Activated CD8-positive, alpha-beta T cell treated with anti-CD3 and anti-CD28 coated beads, Interleukin-2, amount 10 ng/mL, durations not matched to agents 7 days and 5 days (primary cell): ENCODE measurements at regions of chr19 and their contacts with region 1.

Region 1: DNA sequence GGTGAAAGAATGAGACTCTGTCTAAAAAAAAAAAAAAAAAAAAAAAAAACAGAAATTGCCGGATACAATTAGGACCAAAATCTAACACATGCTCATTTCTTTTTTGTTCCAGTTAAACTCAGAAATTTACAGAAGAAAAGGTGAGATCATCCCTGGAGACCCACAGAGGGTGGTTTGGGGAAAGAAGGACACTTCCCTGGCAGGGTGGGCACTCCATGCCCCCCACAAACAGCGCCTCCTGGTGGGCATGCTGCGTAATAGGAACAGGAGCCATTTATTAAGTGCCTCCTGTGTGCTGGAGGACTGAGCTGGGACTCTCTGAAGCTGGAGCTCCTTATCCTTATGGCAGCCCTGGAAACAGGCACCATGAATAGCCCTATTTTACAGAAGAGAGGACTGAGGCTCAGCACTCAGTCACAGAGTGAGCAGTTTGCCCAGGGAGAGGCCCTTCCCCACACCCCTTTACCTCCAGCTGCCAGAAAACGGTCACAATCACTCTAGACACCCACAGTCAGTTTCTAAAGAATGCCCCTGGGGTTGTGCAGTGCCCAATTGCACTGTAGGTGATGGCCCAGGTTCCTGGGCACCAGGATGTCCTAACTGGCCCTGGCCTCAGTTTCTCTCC is 10.1 kb downstream of the C19orf38 start:
- DNase-seq: peak; percentile 56
- ATAC-seq: no peak
- H3K4me3 Mint-ChIP-seq: no peak overlapping the region
- H3K27ac Mint-ChIP-seq: peak overlapping the region; percentile 18
- H3K4me1 Mint-ChIP-seq: peaks cover 7% of the 10 kb centered on the region
- H3K27me3 Mint-ChIP-seq: no peaks in the 10 kb centered on the region

Region 2: GRCh38 chr19:10701955-10702525 is 156.3 kb before region 1 on chr19:
- CTCF ChIA-PET with region 1: interaction called, 20 read pairs
- POLR2A ChIA-PET with region 1: no interaction called
- DNase-seq: peak; percentile 47
- ATAC-seq: peak; percentile 34
- H3K4me3 Mint-ChIP-seq: peak overlapping the region; percentile 80
- H3K27ac Mint-ChIP-seq: peak overlapping the region; percentile 74
- H3K4me1 Mint-ChIP-seq: peaks cover 12% of the 10 kb centered on the region
- H3K27me3 Mint-ChIP-seq: peaks cover 5% of the 10 kb centered on the region

Region 3: DNA sequence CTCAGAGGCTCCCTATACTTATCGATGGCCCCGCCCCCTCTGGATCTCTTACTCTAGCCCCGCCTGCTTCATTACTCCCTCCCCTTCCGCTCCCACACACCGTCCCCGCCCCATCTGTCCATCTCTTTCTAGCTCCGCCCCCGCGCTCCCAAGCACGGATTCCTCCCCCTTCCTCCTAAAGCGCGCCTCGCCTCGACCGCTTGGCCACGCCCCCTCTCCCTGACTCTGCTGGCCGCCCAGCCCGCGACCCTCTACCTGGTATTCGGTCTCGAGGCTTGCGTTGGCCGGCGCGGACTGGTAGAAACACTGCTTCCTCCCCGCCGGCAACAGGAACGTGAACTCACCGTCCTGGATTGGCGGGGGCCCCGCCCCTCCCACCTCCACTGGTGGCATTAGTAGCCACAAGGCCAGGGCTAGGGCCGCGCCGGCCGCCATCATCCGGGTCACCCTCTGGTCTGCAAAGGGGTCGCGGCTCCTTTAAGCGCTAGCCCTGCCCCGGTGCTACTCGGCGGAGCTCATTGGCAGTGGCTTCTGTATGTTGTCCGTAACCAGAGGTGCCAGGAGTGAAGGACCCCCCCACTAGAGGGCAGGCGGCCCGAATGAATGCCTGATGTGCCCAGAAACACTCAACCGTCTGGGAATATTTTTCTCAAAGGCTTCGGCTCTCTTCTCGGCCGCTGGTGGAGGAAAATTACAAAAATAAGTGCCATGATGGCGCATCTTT is 22.4 kb before region 1 on chr19 and contains the start of gene TMED1:
- CTCF ChIA-PET with region 1: interaction called, 37 read pairs
- POLR2A ChIA-PET with region 1: interaction called, 4 read pairs
- DNase-seq: peak; percentile 98
- ATAC-seq: peak; percentile 91
- H3K4me3 Mint-ChIP-seq: peak within 1 kb of the TSS; percentile 89
- H3K27ac Mint-ChIP-seq: peak within 1 kb of the TSS; percentile 99
- H3K4me1 Mint-ChIP-seq: peaks cover 17% of the 10 kb centered on the region
- H3K27me3 Mint-ChIP-seq: no peaks in the 10 kb centered on the region
- total RNA-seq, gene TMED1: 9.3 to 11.2 TPM

Region 4: DNA sequence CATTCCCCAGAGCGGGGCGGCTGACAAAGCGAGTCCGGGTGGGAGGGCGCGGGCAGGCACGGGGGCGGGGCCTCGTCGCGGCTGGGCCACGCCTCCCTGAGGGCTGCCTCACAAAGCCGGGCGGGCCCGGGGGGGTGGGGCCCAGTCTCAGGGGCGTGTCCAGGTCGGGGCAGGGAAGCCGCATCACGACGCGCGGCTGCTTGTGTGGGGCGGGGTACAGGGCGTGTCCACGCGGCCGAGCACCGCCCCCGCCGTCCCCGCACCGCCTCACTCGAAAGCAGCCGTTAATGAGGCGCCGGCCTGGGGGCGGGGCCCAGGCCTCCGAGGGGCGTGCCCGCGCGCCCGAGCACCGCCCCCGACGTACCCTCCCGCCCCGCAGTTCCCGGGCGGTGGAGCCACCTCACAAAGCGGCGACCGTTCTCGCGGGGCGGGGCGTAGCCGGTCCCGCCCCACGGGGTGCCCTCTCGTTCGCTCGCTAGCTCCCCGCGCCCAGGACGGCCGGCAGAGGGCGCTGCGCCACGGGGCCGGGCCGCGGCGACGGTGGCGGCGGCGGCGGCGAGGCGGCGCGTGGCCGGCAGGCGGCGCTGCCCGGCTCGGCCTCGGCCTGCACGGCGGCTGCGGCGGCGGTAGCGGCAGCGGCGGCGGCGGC is 12.8 kb after region 1 on chr19 and contains the start of gene CARM1:
- CTCF ChIA-PET with region 1: interaction called, 60 read pairs
- POLR2A ChIA-PET with region 1: no interaction called
- DNase-seq: peak; percentile 99
- ATAC-seq: peak; percentile 91
- H3K4me3 Mint-ChIP-seq: peak within 1 kb of the TSS; percentile 67
- H3K27ac Mint-ChIP-seq: peak within 1 kb of the TSS; percentile 79
- H3K4me1 Mint-ChIP-seq: peaks cover 28% of the 10 kb centered on the region
- H3K27me3 Mint-ChIP-seq: no peaks in the 10 kb centered on the region
- total RNA-seq, gene CARM1: 33.2 to 33.4 TPM